Gastrocnemius medialis (tissue), 4 donors: ENCODE measurements at regions of chr2 and their contacts with region 1.

Region 1: GRCh38 chr2:29196792-29197788 is 81.9 kb downstream of the CLIP4 start:
- DNase-seq: peak; percentile 45 to 55
- ATAC-seq: peak; percentile 78
- H3K4me3 ChIP-seq: no peak overlapping the region
- H3K27ac ChIP-seq: no peak overlapping the region
- H3K4me1 ChIP-seq: no peaks in the 10 kb centered on the region
- H3K27me3 ChIP-seq: no peaks in the 10 kb centered on the region
- CTCF ChIP-seq: peak; percentile 71 to 85 (median 80)
- POLR2A ChIP-seq: no peak

Region 2: GRCh38 chr2:28810384-28811285 is 386.5 kb before region 1 on chr2 and contains the start of gene SPDYA:
- in situ Hi-C with region 1: loop called in 3 of 4 experiments (anchors 25 kb)
- intact Hi-C with region 1: no loop called
- DNase-seq: peak; percentile 44 to 54
- ATAC-seq: peak; percentile 77 to 80
- H3K4me3 ChIP-seq: peak within 1 kb of the TSS; percentile 53 to 70 (median 59)
- H3K27ac ChIP-seq: no peak within 1 kb of the TSS
- H3K4me1 ChIP-seq: peaks cover 5 to 11% of the 10 kb centered on the region in 2 donors
- H3K27me3 ChIP-seq: no peaks in the 10 kb centered on the region
- CTCF ChIP-seq: no peak
- POLR2A ChIP-seq: no peak
- total RNA-seq, gene SPDYA: 0.31 TPM in 1 of 4 donors, not detected in the others

Region 3: GRCh38 chr2:28821295-28821958 is 375.7 kb before region 1 on chr2:
- in situ Hi-C with region 1: loop called in 3 of 4 experiments (anchors 25 kb)
- intact Hi-C with region 1: loop called (anchors 1 kb)
- DNase-seq: peak; percentile 12 to 28
- ATAC-seq: peak; percentile 70 to 94
- H3K4me3 ChIP-seq: no peak overlapping the region
- H3K27ac ChIP-seq: no peak overlapping the region
- H3K4me1 ChIP-seq: no peaks in the 10 kb centered on the region
- H3K27me3 ChIP-seq: no peaks in the 10 kb centered on the region
- CTCF ChIP-seq: peak; percentile 67 to 80 (median 74)
- POLR2A ChIP-seq: no peak

Region 4: DNA sequence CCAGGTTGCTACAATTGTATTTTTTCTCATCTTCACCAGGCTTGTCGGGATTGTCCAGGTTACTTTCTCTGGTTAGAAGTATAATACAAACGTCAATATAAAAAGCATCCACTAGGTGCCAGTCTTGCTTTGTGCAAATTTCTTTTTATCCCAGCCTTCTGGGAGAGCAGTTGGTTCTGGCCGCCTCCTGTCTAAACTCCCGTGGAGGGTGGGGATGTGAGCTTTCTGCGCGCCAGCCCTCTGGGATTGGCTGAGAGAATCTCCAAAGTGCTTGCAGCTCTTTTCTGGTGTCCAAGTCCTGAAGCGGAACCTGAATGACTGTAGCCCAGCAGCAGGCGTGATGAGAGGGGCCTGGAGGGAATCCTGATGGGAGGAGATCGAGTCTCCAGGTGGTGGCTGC is 238.4 kb before region 1 on chr2:
- in situ Hi-C with region 1: loop called (anchors 5 to 10 kb)
- intact Hi-C with region 1: loop called (anchors 1 kb)
- DNase-seq: peak; percentile 74 to 84
- ATAC-seq: peak; percentile 87 to 88
- H3K4me3 ChIP-seq: peak overlapping the region in 2 of 4 donors; percentile 2 to 6
- H3K27ac ChIP-seq: peak overlapping the region; percentile 67 to 86 (median 80)
- H3K4me1 ChIP-seq: peaks cover 6 to 10% of the 10 kb centered on the region in 2 donors
- H3K27me3 ChIP-seq: no peaks in the 10 kb centered on the region
- CTCF ChIP-seq: peak; percentile 75 to 86 (median 81)
- POLR2A ChIP-seq: peak; percentile 52 to 53

Region 5: DNA sequence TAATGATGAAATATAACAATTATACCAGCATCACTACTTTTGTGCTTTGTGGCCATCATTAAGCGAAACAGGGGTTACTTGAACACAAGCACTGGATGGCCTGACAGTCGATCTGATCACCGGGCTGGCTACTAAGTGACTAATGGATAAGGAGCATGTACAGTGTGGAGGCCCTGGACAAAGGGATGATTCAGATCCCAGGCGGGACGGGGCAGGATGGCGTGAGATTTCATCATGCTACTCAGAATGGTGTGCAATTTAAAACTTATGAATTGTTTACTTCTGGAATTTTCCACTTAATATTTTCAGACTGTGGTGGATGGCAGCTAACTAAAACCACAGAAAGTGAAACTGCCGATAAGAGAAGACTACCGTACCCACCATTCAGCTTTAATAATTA is 88.9 kb before region 1 on chr2:
- in situ Hi-C with region 1: no loop called
- intact Hi-C with region 1: loop called (anchors 5 kb)
- DNase-seq: no peak
- ATAC-seq: no peak
- H3K4me3 ChIP-seq: no peak overlapping the region
- H3K27ac ChIP-seq: no peak overlapping the region
- H3K4me1 ChIP-seq: peaks cover 3 to 6% of the 10 kb centered on the region in 2 donors
- H3K27me3 ChIP-seq: no peaks in the 10 kb centered on the region
- CTCF ChIP-seq: no peak
- POLR2A ChIP-seq: no peak

Region 6: GRCh38 chr2:29165362-29166236 is 31.5 kb before region 1 on chr2:
- in situ Hi-C with region 1: no loop called
- intact Hi-C with region 1: loop called (anchors 5 kb)
- DNase-seq: peak in 1 of 2 donors; percentile 44
- ATAC-seq: peak; percentile 63 to 90
- H3K4me3 ChIP-seq: no peak overlapping the region
- H3K27ac ChIP-seq: peak overlapping the region; percentile 72 to 87 (median 80)
- H3K4me1 ChIP-seq: peaks cover 22 to 26% of the 10 kb centered on the region in 2 donors
- H3K27me3 ChIP-seq: no peaks in the 10 kb centered on the region
- CTCF ChIP-seq: no peak
- POLR2A ChIP-seq: no peak